GM10248 (cell line): ENCODE measurements at regions of chr5 and their contacts with region 1.

Region 1: GRCh38 chr5:66306105-66306843 is 162.2 kb downstream of the SREK1 start:
- DNase-seq: peak; percentile 62
- CTCF ChIP-seq: peak; percentile 90

Region 2: DNA sequence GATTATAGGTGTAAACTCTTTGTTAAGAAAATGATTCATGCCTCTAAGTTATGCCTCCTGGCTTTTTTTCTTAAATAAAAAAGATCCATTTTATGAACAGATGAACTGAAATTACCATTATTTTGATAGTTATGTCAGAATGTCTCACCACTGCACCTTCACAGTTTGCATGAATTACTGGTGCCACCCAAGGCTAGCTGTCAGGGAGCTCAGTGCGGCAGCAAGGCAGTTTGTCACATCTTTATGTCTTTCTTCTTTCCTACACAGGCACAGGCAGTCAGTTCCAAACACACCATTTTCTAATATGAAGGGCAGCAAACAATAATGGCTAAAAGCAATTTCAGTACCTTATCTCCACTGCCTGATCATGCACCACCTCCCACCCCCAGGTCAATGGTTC is 14.5 kb before region 1 on chr5:
- CTCF ChIA-PET with region 1: interaction called, 66 read pairs
- POLR2A ChIA-PET with region 1: no interaction called
- DNase-seq: no peak
- CTCF ChIP-seq: no peak

Region 3: DNA sequence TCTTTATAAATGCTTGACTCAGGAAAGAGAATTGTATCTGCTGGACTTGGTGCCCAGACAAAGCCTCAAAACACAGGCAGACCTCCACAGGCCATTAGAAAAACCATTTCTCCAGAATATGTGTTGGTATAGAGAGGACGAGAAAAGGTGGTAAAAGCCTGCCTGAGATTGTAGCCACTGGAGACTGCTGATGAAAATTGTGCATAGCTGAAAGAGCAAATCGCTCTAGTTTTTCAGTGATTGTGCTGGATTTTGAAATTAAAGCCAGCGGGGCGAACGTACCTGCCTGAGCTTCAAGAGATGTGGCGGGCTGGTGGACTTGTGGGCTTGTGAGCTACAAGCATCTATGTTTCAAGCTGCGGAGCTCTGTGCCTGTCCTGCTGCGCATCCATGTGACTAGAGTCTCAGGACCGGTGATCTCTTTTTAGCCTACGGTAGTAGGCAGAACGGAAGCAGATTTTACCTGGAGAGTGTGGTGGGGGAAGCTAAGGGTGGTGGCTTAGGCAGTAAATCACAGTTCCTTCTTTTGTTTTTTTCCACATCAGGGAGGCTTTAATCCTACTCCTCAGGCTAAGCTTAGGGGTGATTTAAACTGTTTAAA is 31.5 kb after region 1 on chr5:
- CTCF ChIA-PET with region 1: interaction called, 40 read pairs
- POLR2A ChIA-PET with region 1: no interaction called
- DNase-seq: no peak
- CTCF ChIP-seq: no peak

Region 4: DNA sequence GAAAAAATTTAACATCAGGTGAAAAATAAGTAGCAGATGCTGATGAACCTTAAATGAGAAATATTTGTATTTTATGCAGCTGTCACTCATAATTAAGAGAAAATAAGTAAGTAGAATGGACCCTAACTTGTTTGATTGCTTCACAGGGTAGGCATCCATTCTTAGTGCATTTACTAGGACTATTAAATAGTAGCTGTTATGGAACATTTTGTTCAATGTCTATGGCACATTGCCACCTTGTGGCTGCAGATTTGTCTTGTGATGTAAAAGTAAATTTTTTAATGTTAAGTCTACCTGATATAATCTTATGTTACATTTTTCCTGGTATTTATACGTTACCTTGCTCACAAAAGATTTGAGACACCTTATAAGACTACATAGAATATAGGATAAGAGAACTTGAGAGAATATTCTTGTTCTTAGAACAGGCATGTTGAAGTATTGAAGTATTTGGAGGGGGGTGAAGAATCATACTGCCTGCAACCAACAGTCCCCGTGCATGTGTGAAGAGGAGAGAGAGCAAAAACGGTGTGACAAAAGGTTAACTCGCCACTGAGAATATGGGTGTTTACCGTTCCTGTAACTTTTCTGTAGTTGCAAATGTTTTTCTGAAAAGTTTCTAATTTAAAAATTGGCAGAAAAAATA is 451.0 kb after region 1 on chr5:
- CTCF ChIA-PET with region 1: interaction called, 152 read pairs
- POLR2A ChIA-PET with region 1: no interaction called
- DNase-seq: peak; percentile 31
- CTCF ChIP-seq: peak; percentile 34

Region 5: GRCh38 chr5:66864331-66864840 is 558.1 kb after region 1 on chr5:
- CTCF ChIA-PET with region 1: interaction called, 12 read pairs
- POLR2A ChIA-PET with region 1: no interaction called
- DNase-seq: peak; percentile 13
- CTCF ChIP-seq: peak; percentile 61